ENCODE measurements at regions of chr17 and their contacts with region 1.

Region 1: DNA sequence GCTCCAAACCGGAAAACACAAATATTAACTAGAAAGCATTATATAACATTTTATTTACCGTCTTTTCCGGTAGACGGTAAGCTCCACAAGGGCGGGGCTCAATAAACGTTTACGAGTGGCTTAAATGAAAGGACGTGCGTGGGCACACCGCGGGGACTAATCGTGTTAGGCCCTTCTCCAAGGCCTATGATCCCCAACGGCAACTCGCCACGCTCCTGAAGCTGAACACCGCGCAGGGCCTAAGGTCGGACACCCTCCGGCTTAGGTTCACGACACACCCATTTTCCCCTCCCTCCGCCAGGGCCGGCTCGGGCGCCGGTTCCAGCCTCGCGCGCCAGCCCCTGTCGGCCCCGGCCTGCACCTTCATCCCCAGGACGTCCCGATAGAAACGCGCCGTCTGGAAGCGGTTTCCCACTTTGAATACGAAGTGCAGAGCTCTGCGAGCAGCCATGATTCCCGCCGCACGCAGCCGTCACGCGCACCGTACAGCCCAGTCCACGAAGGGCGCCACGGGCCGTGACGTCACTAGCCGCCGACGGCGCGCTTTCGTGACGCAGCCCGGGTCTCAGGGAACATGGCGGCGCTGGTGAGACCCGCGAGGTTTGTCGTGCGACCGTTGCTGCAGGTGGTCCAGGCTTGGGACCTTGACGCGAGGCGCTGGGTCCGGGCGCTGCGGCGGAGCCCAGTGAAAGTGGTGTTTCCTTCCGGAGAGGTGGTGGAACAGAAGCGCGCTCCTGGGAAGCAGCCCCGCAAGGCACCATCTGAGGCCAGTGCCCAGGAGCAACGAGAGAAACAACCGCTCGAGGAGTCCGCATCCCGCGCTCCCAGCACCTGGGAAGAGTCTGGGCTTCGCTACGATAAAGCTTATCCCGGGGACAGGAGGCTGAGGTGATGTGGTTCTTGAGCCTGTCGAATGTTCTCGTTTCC is at the starts of genes GLOD4 and MRM3:
- DNase-seq: peak; percentile 93 to 97 (median 95)
- H3K4me3 ChIP-seq: peak within 1 kb of the TSS; percentile 99 to 100
- H3K4me3 Mint-ChIP-seq: peak within 1 kb of the TSS; percentile 94 to 98 (median 96)
- H3K27ac ChIP-seq: peak within 1 kb of the TSS; percentile 90
- H3K27ac Mint-ChIP-seq: peak within 1 kb of the TSS; percentile 96 to 99 (median 99)
- H3K4me1 ChIP-seq: peaks cover 38% of the 10 kb centered on the region
- H3K4me1 Mint-ChIP-seq: peaks cover 22 to 43% (median 34%) of the 10 kb centered on the region in 4 donors
- H3K27me3 ChIP-seq: no peaks in the 10 kb centered on the region
- H3K27me3 Mint-ChIP-seq: no peaks in the 10 kb centered on the region
- total RNA-seq, gene GLOD4: 94.9 to 97.2 TPM
- total RNA-seq, gene MRM3: 18.6 to 20.9 TPM

Region 2: DNA sequence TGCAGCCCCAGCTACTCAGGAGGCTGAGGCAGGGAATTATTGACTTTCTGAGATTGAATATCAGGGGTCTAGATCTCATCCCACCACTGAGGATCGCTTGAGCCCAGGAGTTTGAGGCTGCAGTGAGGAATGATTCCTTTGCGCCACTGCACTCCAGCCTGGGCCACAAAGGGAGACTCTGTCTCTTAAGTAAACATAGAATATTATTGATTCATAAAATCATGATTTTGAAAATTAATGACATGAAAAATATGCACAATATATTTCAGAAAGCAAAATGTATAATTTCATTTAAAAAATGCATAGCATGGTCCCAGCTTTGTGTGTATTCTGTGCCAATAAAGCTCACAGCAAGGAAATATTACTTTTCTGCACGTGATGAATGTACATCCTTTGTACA is 65.8 kb before region 1 on chr17:
- CTCF ChIA-PET with region 1: no interaction called
- POLR2A ChIA-PET with region 1: interaction called, 11 read pairs
- intact Hi-C with region 1: no loop called
- DNase-seq: no peak
- H3K4me3 ChIP-seq: no peak overlapping the region
- H3K4me3 Mint-ChIP-seq: peak overlapping the region in 5 of 8 donors; percentile 17 to 66 (median 63)
- H3K27ac ChIP-seq: no peak overlapping the region
- H3K27ac Mint-ChIP-seq: no peak overlapping the region
- H3K4me1 ChIP-seq: peaks cover 19% of the 10 kb centered on the region
- H3K4me1 Mint-ChIP-seq: peaks cover 13 to 33% (median 23%) of the 10 kb centered on the region in 4 donors
- H3K27me3 ChIP-seq: no peaks in the 10 kb centered on the region
- H3K27me3 Mint-ChIP-seq: peaks cover 0 to 2% of the 10 kb centered on the region in 2 donors

Region 3: DNA sequence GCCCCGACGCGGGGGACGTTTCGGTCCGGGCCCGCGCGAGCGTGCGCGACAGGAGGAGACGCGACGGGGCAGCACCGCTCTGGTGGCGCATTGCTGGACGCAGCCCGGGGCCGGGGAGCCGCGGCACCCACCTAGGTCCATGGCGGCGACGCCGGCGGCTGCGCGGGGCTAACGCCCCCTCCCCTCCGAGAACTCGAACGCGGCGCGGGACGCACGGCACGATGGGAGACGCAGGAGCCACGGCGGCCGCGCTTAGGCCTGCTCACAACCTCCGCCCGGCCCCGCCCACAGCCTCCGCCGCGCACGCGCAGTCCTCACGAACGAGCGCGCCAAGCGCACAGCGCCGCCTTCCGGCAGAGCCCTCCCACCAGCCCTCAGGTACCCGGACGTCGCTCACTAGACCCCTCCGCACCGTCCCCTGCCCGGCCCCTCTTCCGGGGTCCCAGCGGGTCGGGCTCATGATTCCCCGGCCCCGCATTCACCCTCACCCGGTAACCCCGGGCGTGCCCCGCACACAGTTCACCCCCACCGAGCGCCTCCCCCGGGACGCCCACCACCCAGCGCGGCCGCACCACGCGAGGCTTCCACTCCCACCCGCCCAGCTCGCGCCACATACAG is 30.0 kb before region 1 on chr17 and contains the start of gene GEMIN4:
- CTCF ChIA-PET with region 1: interaction called, 6 read pairs
- POLR2A ChIA-PET with region 1: interaction called, 37 read pairs
- intact Hi-C with region 1: loop called (anchors 1 kb)
- DNase-seq: peak; percentile 93 to 99 (median 96)
- H3K4me3 ChIP-seq: peak within 1 kb of the TSS; percentile 73 to 81
- H3K4me3 Mint-ChIP-seq: peak within 1 kb of the TSS; percentile 92 to 97 (median 94)
- H3K27ac ChIP-seq: peak within 1 kb of the TSS; percentile 69
- H3K27ac Mint-ChIP-seq: peak within 1 kb of the TSS; percentile 86 to 97 (median 95)
- H3K4me1 ChIP-seq: peaks cover 27% of the 10 kb centered on the region
- H3K4me1 Mint-ChIP-seq: peaks cover 24 to 46% (median 33%) of the 10 kb centered on the region in 4 donors
- H3K27me3 ChIP-seq: no peaks in the 10 kb centered on the region
- H3K27me3 Mint-ChIP-seq: no peaks in the 10 kb centered on the region
- total RNA-seq, gene GEMIN4: 24.4 to 24.7 TPM

Region 4: GRCh38 chr17:794876-795275 is 12.8 kb after region 1 on chr17:
- CTCF ChIA-PET with region 1: interaction called, 4 read pairs
- POLR2A ChIA-PET with region 1: interaction called, 10 read pairs
- intact Hi-C with region 1: no loop called
- DNase-seq: peak in 4 of 5 donors; percentile 29 to 35 (median 30)
- H3K4me3 ChIP-seq: no peak overlapping the region
- H3K4me3 Mint-ChIP-seq: peak overlapping the region in 1 of 8 donors; percentile 26
- H3K27ac ChIP-seq: no peak overlapping the region
- H3K27ac Mint-ChIP-seq: peak overlapping the region in 2 of 7 donors; percentile 57 to 64
- H3K4me1 ChIP-seq: peaks cover 5% of the 10 kb centered on the region
- H3K4me1 Mint-ChIP-seq: peaks cover 3 to 9% (median 6%) of the 10 kb centered on the region in 4 donors
- H3K27me3 ChIP-seq: no peaks in the 10 kb centered on the region
- H3K27me3 Mint-ChIP-seq: no peaks in the 10 kb centered on the region

Region 5: DNA sequence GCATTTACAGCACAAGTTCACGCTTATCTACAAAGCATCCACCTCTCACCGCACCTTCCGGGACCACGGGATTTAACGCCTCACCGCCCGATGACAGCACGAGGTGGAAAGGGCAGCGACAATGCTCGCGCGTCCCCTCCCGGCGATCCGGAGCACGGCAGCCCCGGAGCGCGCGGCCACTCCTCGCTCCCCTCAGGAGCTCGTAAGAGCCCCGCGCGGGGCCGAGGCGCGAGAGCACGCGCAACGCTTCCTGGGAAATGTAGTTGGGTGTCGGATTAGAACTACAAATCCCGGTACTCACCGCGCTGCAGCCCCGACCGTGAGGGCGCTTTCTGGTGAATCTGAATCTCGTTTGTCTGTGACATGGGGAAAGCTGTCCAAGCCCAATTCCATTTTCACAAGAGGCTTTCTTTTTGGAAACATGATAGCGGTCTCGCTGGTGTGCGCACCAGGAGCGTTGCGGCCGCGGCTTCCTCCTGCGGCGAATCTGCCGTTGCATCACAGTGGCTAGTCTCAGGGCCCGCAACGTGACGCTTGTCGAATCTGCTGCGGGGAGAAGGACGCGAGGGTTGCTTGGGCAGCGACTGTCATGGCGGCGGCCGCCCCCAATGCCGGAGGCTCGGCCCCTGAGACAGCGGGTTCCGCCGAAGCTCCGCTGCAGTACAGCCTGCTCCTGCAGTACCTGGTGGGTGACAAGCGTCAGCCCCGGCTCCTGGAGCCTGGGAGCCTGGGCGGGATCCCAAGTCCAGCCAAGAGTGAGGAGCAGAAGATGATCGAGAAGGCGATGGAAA is 214.7 kb after region 1 on chr17 and contains the start of gene TIMM22:
- CTCF ChIA-PET with region 1: interaction called, 11 read pairs
- POLR2A ChIA-PET with region 1: interaction called, 29 read pairs
- intact Hi-C with region 1: loop called (anchors 1 kb)
- DNase-seq: peak; percentile 94 to 95 (median 95)
- H3K4me3 ChIP-seq: peak within 1 kb of the TSS; percentile 84 to 99
- H3K4me3 Mint-ChIP-seq: peak within 1 kb of the TSS; percentile 96 to 99 (median 98)
- H3K27ac ChIP-seq: peak within 1 kb of the TSS; percentile 83
- H3K27ac Mint-ChIP-seq: peak within 1 kb of the TSS; percentile 96 to 99 (median 99)
- H3K4me1 ChIP-seq: peaks cover 18% of the 10 kb centered on the region
- H3K4me1 Mint-ChIP-seq: peaks cover 13 to 34% (median 22%) of the 10 kb centered on the region in 4 donors
- H3K27me3 ChIP-seq: no peaks in the 10 kb centered on the region
- H3K27me3 Mint-ChIP-seq: no peaks in the 10 kb centered on the region
- total RNA-seq, gene TIMM22: 12.3 to 13.2 TPM

Measured in CD4-positive, alpha-beta memory T cell (primary cell).